WTC11 (cell line): ENCODE measurements at regions of chr12 and their contacts with region 1.

Region 1: GRCh38 chr12:98998697-98999299 is 353.7 kb downstream of the APAF1 start:
- DNase-seq: no peak
- ATAC-seq: peak; percentile 73
- H3K4me3 Mint-ChIP-seq: no peak overlapping the region
- H3K27ac Mint-ChIP-seq: no peak overlapping the region
- H3K4me1 Mint-ChIP-seq: no peaks in the 10 kb centered on the region
- H3K27me3 Mint-ChIP-seq: no peaks in the 10 kb centered on the region
- CTCF ChIP-seq: peak; percentile 40

Region 2: DNA sequence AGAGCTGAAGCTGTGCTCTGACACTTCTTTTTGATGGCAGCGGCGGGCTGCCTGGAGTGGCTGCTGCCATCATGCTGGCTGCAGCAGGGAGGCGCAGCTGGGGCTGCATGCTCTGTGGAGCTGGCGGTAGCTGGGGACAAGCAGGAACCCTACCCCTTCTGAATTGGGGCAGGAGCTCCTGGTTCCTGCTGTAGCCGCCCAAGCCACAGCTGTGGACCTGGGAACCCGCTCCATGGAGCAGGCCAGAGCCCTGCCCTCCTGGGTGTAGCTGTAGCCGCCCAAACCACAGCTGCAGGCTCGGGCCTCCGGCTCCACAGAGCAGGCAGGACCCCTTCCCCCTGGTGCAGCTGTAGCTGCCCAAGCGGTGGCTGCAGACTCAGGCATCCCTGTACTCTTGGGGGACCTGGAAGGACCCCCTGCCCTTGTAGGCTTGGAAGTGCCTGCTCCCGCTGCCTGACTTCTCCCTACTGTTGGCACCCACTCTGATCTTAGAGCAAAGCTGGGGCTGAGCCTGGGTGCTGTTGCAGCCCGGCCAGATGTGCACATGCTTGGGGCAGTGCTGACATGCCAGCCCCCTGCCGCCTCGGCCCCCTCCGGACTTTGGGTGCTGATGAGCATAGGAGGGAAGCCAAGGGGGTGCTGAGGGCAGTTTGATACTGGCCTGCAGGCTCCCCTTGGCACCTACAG is 320.4 kb before region 1 on chr12:
- CTCF ChIA-PET with region 1: interaction called, 10 read pairs
- POLR2A ChIA-PET with region 1: no interaction called
- DNase-seq: peak; percentile 31
- ATAC-seq: peak; percentile 82
- H3K4me3 Mint-ChIP-seq: no peak overlapping the region
- H3K27ac Mint-ChIP-seq: no peak overlapping the region
- H3K4me1 Mint-ChIP-seq: no peaks in the 10 kb centered on the region
- H3K27me3 Mint-ChIP-seq: no peaks in the 10 kb centered on the region
- CTCF ChIP-seq: no peak

Region 3: DNA sequence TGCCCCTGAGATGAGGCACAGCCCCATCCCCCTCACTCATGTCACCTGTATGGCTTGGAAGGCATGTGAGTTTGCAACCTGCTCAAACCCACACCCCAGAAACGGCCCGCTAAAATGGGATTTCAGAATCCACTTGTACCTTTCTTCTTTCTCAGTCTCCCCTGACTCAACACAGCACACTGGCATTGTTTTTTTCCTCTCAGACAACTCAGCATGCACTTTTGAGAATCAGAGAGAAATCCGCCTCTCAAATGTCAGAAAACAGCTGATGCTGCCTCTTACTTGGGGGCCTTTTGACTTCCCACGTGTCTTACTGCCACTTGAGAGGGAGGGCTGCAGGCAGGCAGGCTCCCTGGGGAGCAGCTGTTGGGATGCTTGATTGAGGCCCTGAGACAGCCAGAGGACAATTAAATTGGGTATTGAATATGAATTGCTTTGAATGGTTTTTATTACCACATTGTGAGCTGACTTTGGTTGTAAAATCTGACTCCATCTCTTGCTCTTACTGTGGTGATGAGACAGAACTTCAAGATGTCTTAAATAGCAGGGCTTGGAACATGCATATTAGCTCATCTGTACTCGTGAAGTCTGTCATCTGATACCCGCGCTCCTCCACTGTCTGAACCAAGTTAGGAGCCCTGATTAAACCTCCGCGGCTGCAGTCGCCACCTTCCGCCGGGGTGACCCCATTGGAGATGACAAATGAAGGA is 257.1 kb before region 1 on chr12:
- CTCF ChIA-PET with region 1: interaction called, 15 read pairs
- POLR2A ChIA-PET with region 1: no interaction called
- DNase-seq: no peak
- ATAC-seq: peak; percentile 50
- H3K4me3 Mint-ChIP-seq: no peak overlapping the region
- H3K27ac Mint-ChIP-seq: no peak overlapping the region
- H3K4me1 Mint-ChIP-seq: peaks cover 29% of the 10 kb centered on the region
- H3K27me3 Mint-ChIP-seq: peaks cover 37% of the 10 kb centered on the region
- CTCF ChIP-seq: no peak

Region 4: GRCh38 chr12:98973395-98973794 is 25.4 kb before region 1 on chr12:
- CTCF ChIA-PET with region 1: interaction called, 11 read pairs
- POLR2A ChIA-PET with region 1: no interaction called
- DNase-seq: no peak
- ATAC-seq: no peak
- H3K4me3 Mint-ChIP-seq: no peak overlapping the region
- H3K27ac Mint-ChIP-seq: no peak overlapping the region
- H3K4me1 Mint-ChIP-seq: 0 out of 2 replicates have a peak, but pooled peaks cover under 1% of the 10 kb centered on the region
- H3K27me3 Mint-ChIP-seq: no peaks in the 10 kb centered on the region; the same call in 1 of the 2 replicates
- CTCF ChIP-seq: no peak